Activated naive CD4-positive, alpha-beta T cell treated with anti-CD3 and anti-CD28 coated beads for 36 hours (primary cell): ENCODE measurements at regions of chr1 and their contacts with region 1.

Region 1: GRCh38 chr1:42816585-42817434 is at the starts of genes ERMAP and SVBP:
- DNase-seq: peak; percentile 95
- H3K4me3 Mint-ChIP-seq: peak within 1 kb of the TSS; percentile 76
- H3K27ac Mint-ChIP-seq: peak within 1 kb of the TSS; percentile 77
- H3K4me1 Mint-ChIP-seq: peaks cover 17% of the 10 kb centered on the region
- H3K27me3 Mint-ChIP-seq: no peaks in the 10 kb centered on the region
- total RNA-seq, gene ERMAP: 3.1 TPM
- total RNA-seq, gene SVBP: 16.4 to 17.0 TPM

Region 2: GRCh38 chr1:42335050-42335808 is 481.6 kb before region 1 on chr1 and contains the start of gene FOXJ3:
- CTCF ChIA-PET with region 1: no interaction called
- intact Hi-C with region 1: loop called (anchors 5 kb)
- DNase-seq: peak; percentile 93
- H3K4me3 Mint-ChIP-seq: peak within 1 kb of the TSS; percentile 92
- H3K27ac Mint-ChIP-seq: peak within 1 kb of the TSS; percentile 88
- H3K4me1 Mint-ChIP-seq: peaks cover 39% of the 10 kb centered on the region
- H3K27me3 Mint-ChIP-seq: no peaks in the 10 kb centered on the region
- total RNA-seq, gene FOXJ3: 35.6 to 37.2 TPM

Region 3: GRCh38 chr1:42462828-42463763 is 353.7 kb before region 1 on chr1 and contains the start of gene CCDC30:
- CTCF ChIA-PET with region 1: no interaction called
- intact Hi-C with region 1: loop called (anchors 5 kb)
- DNase-seq: peak; percentile 97
- H3K4me3 Mint-ChIP-seq: peak within 1 kb of the TSS; percentile 77
- H3K27ac Mint-ChIP-seq: peak within 1 kb of the TSS; percentile 34
- H3K4me1 Mint-ChIP-seq: peaks cover 32% of the 10 kb centered on the region
- H3K27me3 Mint-ChIP-seq: no peaks in the 10 kb centered on the region
- total RNA-seq, gene CCDC30: 1.4 to 2.1 TPM

Region 4: GRCh38 chr1:42657971-42658879 is 158.6 kb before region 1 on chr1 and contains the start of gene PPIH:
- CTCF ChIA-PET with region 1: no interaction called
- intact Hi-C with region 1: loop called (anchors 1 kb)
- DNase-seq: peak; percentile 97
- H3K4me3 Mint-ChIP-seq: peak within 1 kb of the TSS; percentile 98
- H3K27ac Mint-ChIP-seq: peak within 1 kb of the TSS; percentile 94
- H3K4me1 Mint-ChIP-seq: peaks cover 36% of the 10 kb centered on the region
- H3K27me3 Mint-ChIP-seq: no peaks in the 10 kb centered on the region
- total RNA-seq, gene PPIH: 107 to 108 TPM

Region 5: DNA sequence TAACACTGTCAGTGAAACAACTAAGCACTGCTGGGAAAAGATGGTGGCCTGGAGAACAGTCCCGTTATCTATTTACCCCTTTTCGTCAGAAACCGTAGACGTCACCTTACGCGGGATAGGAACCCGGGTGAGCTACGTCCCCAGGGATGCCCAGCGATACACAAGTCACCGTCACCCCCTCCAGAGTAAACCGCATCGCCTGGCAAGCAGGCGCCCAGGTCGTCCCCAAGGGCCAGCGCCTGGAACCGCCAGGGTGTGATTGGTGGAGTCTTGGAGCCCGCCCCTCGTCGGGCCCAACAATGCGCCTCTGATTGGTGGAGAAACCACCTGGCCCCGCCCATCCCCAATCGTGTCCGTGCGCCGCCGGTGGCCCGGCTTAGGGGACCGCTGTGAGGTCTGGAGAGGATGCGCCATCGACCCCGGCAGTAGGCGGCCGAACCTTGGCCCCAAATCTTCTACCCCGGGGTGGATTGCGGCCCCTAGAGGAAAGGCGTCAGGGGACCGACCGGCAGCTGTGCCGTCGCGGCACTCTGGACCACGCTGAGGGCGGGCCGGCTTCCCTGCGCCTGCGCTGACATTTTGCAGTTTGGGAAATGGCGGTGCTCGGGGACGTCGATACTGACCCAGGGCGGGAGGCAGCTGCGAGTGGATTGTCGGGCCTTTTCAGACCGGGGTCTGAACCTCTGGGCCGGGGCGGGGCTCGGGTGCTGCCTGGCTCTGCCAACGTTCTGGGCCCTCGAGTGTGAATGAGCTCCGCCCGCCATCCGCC is 107.5 kb after region 1 on chr1:
- CTCF ChIA-PET with region 1: interaction called, 3 read pairs
- intact Hi-C with region 1: loop called (anchors 2 kb)
- DNase-seq: peak; percentile 95
- H3K4me3 Mint-ChIP-seq: peak overlapping the region; percentile 92
- H3K27ac Mint-ChIP-seq: peak overlapping the region; percentile 88
- H3K4me1 Mint-ChIP-seq: peaks cover 23% of the 10 kb centered on the region
- H3K27me3 Mint-ChIP-seq: no peaks in the 10 kb centered on the region

Region 6: GRCh38 chr1:43171876-43172526 is 355.2 kb after region 1 on chr1 and contains the starts of genes CFAP57 and EBNA1BP2:
- CTCF ChIA-PET with region 1: no interaction called
- intact Hi-C with region 1: loop called (anchors 1 kb)
- DNase-seq: peak; percentile 96
- H3K4me3 Mint-ChIP-seq: peak within 1 kb of the TSS; percentile 99
- H3K27ac Mint-ChIP-seq: peak within 1 kb of the TSS; percentile 90
- H3K4me1 Mint-ChIP-seq: peaks cover 39% of the 10 kb centered on the region
- H3K27me3 Mint-ChIP-seq: peaks cover 2% of the 10 kb centered on the region
- total RNA-seq, gene CFAP57: 0.12 to 0.14 TPM
- total RNA-seq, gene EBNA1BP2: 88.0 to 88.3 TPM